MCF 10A (cell line): ENCODE measurements at regions of chr1 and their contacts with region 1.

Region 1: DNA sequence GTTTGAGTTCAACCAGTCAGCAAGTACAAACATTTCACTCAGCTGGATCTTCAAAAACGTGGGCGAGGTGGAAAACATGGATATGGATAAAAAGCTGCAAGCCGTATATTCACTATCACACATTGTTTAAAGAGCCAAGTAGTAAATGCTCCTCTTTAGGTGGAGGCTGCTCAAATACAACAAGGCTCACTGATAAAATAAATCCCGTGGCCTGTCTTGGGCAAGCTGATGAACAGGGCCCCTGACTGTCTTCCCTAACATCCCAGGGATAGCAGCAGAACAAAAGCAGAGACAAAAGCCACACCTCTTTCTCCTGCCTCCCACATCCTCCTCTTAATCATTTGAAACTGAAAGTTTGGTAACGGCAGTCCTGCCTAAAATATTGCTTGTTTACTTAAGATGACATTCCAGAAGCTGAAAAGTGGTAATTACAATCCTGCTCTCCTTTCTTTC is 357.7 kb downstream of the TTLL7 start:
- DNase-seq: peak; percentile 24
- H3K4me3 Mint-ChIP-seq: no peak overlapping the region
- H3K27ac Mint-ChIP-seq: no peak overlapping the region
- H3K4me1 Mint-ChIP-seq: peaks cover 5% of the 10 kb centered on the region
- H3K27me3 Mint-ChIP-seq: no peaks in the 10 kb centered on the region
- CTCF ChIP-seq: no peak

Region 2: DNA sequence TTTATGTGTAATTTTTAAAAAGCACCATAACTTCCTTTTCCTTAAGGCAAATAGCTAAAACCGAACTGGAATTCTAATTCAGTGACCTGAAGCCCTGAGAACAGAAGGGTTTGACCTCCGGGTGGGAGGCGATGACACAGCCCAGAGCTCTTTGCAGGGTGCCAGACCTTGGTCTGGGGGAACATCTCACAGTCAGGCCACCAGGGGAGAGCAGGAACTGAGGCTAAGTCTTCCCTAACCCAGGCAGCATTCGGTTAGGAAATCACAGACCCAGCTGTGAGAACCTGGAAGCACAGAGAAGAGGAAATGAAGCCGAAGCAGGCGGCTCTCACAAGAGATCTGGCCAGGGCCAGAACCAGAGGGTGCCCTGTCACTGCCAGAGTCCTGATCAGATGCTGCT is 87.1 kb before region 1 on chr1:
- CTCF ChIA-PET with region 1: no interaction called
- POLR2A ChIA-PET with region 1: no interaction called
- intact Hi-C with region 1: loop called (anchors 10 kb)
- DNase-seq: no peak
- H3K4me3 Mint-ChIP-seq: no peak overlapping the region
- H3K27ac Mint-ChIP-seq: no peak overlapping the region
- H3K4me1 Mint-ChIP-seq: no peaks in the 10 kb centered on the region
- H3K27me3 Mint-ChIP-seq: no peaks in the 10 kb centered on the region
- CTCF ChIP-seq: no peak